ENCODE measurements at regions of chr13 and their contacts with region 1.

Region 1: DNA sequence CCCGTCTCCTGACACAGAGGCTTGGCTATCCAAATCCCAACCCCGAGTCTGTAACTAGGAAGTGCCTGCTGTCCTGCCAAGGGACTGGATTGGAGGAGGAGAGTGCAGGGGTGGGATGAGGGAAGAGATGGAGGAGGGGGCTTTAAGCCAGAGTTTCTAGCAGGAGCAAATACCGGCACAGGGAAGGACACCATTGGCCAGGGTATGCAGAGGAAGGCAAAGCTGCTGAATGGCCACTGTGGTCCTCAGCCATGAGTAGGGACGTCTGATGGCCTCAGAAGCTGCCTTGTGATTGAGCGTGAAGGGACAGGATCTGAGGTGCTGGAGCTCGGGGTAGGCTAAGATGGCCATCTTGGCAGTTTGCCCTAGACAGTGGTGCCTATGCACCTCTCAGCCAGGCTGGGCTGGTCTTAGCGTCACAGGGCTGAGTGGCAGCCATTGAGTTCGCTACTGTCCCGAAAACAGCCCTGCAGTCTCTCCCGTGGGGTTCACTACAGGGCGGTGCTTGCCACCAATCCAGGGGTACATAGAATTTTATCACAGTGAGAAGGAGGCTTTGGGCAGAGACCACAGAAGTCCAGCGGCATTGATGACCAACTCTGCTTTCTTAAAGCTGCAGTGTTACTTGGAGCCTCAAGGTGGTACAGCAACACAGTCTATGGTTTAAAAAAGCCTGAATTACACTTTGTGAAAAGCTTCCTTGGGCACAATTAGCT is 61.8 kb downstream of the AKAP11 start:
- DNase-seq: peak; percentile 12
- H3K4me3 Mint-ChIP-seq: peak overlapping the region; percentile 62
- H3K27ac Mint-ChIP-seq: peak overlapping the region; percentile 41
- H3K4me1 Mint-ChIP-seq: peaks cover 11% of the 10 kb centered on the region
- H3K27me3 Mint-ChIP-seq: no peaks in the 10 kb centered on the region
- CTCF ChIP-seq: no peak

Region 2: DNA sequence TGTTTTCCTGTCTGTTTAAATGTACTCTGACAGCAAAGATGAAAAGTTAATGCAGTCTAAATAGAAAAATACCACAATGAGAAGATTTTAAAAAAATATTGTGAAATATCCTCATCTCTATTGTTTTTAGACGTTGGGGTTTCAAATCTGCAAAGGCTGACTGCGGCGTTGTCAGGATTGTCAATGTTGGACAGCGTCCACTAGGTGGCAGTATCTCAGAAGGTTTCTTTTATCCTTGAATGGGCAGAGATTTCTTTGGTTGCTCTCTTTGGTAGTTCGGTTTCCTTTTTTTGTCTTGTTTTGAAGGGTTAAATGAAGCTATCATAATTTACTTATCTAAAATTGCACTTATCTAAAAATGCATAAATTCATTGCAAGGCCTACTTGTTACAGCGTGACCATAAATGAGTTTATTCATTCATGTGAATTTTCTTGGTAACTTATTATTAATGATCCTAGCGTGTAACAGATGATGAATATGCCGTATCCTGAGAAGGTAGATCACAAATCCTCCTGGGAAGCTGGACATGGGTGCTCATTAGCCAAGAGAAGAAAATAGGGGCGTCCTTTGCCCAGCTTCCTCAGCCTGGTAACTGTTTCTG is 261.3 kb after region 1 on chr13:
- CTCF ChIA-PET with region 1: no interaction called
- intact Hi-C with region 1: loop called (anchors 10 kb)
- DNase-seq: peak; percentile 45
- H3K4me3 Mint-ChIP-seq: no peak overlapping the region
- H3K27ac Mint-ChIP-seq: no peak overlapping the region
- H3K4me1 Mint-ChIP-seq: no peaks in the 10 kb centered on the region
- H3K27me3 Mint-ChIP-seq: peaks cover 45% of the 10 kb centered on the region
- CTCF ChIP-seq: peak; percentile 41

Region 3: DNA sequence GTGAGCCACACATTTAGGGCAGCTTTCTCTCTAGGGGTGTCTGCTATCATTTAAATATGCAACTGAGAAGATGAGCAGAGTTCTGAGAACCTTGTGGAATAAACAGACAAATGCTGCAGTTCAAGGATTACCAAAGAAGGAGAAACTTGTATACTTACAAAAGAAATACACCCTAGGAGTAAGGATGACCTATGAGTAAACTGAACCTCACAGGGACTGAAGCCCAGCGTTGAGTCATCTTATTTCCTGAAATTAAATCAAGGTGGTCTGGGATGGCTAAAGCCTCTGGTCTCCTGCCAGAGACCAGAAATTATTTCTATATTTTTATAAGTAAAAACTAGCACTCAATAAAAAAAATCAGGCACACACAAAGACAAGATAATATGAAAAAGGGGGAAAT is 487.7 kb after region 1 on chr13:
- CTCF ChIA-PET with region 1: interaction called, 3 read pairs
- intact Hi-C with region 1: loop called (anchors 10 kb)
- DNase-seq: no peak
- H3K4me3 Mint-ChIP-seq: no peak overlapping the region
- H3K27ac Mint-ChIP-seq: no peak overlapping the region
- H3K4me1 Mint-ChIP-seq: no peaks in the 10 kb centered on the region
- H3K27me3 Mint-ChIP-seq: peaks cover under 1% of the 10 kb centered on the region
- CTCF ChIP-seq: no peak

Measured in Calu3 (cell line).